KBM-7 (cell line): ENCODE measurements at regions of chr6 and their contacts with region 1.

Region 1: DNA sequence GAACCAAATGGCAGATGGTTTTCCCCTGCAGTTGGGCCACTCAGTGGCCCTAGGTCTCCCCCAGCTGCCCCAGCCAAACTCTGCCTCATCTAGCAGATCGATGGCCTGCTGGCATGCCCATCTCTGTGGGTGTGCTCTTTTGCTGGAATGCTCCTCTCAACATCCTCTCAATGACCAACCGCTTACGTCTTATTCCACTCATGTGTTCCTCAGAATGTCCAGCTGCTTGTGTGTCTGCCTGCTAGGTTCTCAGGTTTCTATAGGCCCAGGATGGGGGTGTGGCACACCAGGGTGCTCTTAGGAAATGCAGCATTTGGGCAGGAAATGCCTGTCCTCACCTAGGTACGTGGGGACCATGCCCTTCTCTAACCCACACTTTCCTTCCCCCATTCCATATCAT is 509.9 kb upstream of the SYNCRIP start:
- DNase-seq: no peak

Region 2: GRCh38 chr6:85756982-85757381 is 395.6 kb before region 1 on chr6:
- in situ Hi-C with region 1: loop called (anchors 25 kb)
- DNase-seq: peak; percentile 45